Cardiac septum (tissue), 1 donor: ENCODE measurements at regions of chrX and their contacts with region 1.

Region 1: GRCh38 chrX:108138814-108139702 is 47.5 kb downstream of the ATG4A start:
- DNase-seq: no peak

Region 2: GRCh38 chrX:107902721-107903120 is 236.3 kb before region 1 on chrX:
- intact Hi-C with region 1: no loop called
- DNase-seq: no peak

Region 3: DNA sequence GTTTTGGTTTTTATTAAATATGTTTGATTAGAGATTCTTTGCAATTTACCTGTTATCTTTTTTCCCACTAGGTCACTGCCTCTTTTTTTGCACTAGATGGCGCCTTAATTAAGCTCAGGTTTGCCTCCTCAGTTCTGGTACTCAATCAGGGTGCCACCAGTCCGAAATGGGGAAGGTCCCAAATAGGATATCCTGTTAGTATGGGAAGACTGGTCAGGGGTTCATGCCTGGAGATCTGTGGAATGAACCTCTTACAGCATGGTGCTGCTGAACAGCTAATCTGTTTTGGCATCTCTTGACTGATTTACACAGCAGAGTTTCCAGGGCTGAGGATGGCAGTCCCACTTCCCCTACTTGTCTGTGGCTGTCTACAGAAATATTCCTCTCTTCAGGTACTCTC is 118.4 kb before region 1 on chrX:
- intact Hi-C with region 1: loop called (anchors 2 kb)
- DNase-seq: no peak